Activated T-helper 2 cell treated with anti-CD3 and anti-CD28 coated beads, Interferon-gamma antibody, Interleukin-2, Interleukin-4, amounts not matched to agents 10 μg/mL and 5 μg/mL and 100 μg/mL, durations not matched to agents 14 hours and 24 hours and 36 hours (primary cell): ENCODE measurements at regions of chr15 and their contacts with region 1.

Region 1: DNA sequence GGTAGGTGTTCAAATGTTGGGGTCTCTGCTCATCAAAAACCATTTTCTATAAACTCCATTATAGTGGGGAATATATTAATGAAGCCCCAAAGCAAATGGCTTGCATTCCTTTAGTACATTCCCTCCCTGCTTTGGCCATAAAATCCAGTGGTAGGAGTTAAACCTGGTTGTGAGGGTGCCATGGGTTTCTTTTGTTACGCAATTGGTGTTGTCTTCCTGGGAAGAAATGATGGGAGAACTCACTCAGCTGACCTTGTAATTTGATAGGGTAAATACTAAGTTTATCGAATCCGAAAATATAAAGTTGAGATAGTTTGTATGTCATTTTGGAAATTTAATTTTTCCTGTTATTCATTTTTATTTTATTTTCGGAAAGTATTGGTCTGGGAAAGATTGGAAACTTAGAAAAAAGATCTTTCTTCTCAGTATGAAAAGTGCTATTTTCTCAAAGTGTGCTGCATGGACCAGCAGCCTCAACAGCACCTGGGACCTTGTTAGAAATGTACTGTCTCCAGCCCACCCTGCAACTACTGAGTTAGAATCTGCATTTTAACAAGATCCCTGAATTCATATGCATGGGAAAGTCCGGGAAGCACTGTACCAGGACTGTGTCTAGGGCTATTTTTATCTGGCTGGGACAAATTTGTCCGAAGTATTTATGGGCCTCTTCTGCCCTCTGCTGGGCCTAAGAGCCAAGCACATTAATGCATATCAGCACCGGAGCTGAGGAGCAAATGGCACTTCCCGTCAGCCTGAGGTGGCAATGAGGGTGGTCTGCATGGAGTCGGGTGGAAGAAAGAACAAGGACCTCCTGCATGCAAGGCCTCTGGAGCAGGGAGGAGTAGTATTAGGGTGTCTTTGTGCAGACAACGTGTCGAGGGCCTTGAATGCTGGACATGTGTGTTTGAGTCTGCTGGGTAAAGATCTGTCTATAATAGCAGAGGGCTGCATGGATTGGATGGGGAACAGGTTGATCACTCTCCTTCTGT is 54.7 kb downstream of the FAM81A start:
- DNase-seq: peak; percentile 38
- H3K4me3 Mint-ChIP-seq: no peak overlapping the region
- H3K27ac Mint-ChIP-seq: no peak overlapping the region
- H3K4me1 Mint-ChIP-seq: peaks cover 2% of the 10 kb centered on the region
- H3K27me3 Mint-ChIP-seq: peaks cover 26% of the 10 kb centered on the region

Region 2: GRCh38 chr15:58957101-58957973 is 535.3 kb before region 1 on chr15:
- intact Hi-C with region 1: loop called (anchors 5 kb)
- DNase-seq: peak; percentile 50
- H3K4me3 Mint-ChIP-seq: no peak overlapping the region
- H3K27ac Mint-ChIP-seq: no peak overlapping the region
- H3K4me1 Mint-ChIP-seq: peaks cover 12% of the 10 kb centered on the region
- H3K27me3 Mint-ChIP-seq: peaks cover 6% of the 10 kb centered on the region

Region 3: DNA sequence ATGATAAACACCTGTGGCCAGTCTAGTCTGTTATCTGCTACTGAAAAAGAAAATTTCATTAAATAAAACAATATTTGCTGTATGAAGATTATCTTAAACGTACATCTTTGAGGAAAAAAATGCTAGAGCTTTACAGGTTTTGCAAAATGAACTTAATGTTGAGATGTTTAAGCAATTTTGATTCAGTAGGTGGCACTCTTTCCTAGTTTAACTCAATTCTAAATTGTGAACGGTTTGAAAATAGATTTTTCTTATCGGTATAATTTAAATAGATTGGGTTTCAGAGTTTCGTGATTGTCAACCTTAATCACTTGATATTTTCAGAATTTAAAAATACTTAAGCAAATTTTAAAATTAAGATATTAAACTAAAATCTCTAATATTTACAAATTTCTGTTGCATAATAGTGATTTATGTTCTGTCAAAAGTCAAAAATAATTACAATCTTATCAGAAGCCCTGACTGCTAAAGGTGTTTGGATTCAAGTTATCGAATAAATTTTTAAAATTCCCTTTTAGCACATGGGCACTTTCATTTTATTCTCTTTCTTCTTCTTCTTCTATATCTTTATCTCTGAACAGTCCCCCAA is 512.2 kb before region 1 on chr15:
- intact Hi-C with region 1: loop called (anchors 1 kb)
- DNase-seq: no peak
- H3K4me3 Mint-ChIP-seq: no peak overlapping the region
- H3K27ac Mint-ChIP-seq: peak overlapping the region; percentile 46
- H3K4me1 Mint-ChIP-seq: peaks cover 34% of the 10 kb centered on the region
- H3K27me3 Mint-ChIP-seq: peaks cover 10% of the 10 kb centered on the region

Region 4: GRCh38 chr15:59174835-59175831 is 317.6 kb before region 1 on chr15:
- intact Hi-C with region 1: loop called (anchors 2 kb)
- DNase-seq: peak; percentile 22
- H3K4me3 Mint-ChIP-seq: no peak overlapping the region
- H3K27ac Mint-ChIP-seq: no peak overlapping the region
- H3K4me1 Mint-ChIP-seq: peaks cover 16% of the 10 kb centered on the region
- H3K27me3 Mint-ChIP-seq: peaks cover 6% of the 10 kb centered on the region

Region 5: GRCh38 chr15:59247364-59247763 is 245.3 kb before region 1 on chr15:
- intact Hi-C with region 1: loop called (anchors 2 kb)
- DNase-seq: peak; percentile 45
- H3K4me3 Mint-ChIP-seq: no peak overlapping the region
- H3K27ac Mint-ChIP-seq: no peak overlapping the region
- H3K4me1 Mint-ChIP-seq: peaks cover 39% of the 10 kb centered on the region
- H3K27me3 Mint-ChIP-seq: peaks cover 2% of the 10 kb centered on the region

Region 6: DNA sequence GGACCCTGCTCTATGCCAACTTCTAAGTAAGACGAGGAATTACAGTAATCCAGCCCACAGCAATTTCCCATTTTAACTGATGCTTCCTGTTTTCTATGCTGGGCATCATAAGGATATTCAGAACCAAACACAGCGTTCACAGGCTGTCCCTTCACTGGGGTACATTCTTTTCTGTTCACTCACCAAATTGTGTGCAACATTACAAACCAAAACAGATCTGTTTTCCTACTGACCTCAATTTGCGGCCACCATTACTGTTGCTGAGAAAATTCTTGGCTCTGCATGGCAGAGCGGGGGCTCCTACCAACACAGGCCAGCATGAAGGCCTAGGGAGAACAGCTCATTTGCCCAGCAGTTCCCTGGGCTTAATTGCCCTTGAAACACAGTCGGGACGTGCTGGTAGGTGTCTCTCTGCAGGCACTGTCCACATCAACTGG is 196.5 kb before region 1 on chr15:
- intact Hi-C with region 1: no loop called
- DNase-seq: no peak
- H3K4me3 Mint-ChIP-seq: no peak overlapping the region
- H3K27ac Mint-ChIP-seq: no peak overlapping the region
- H3K4me1 Mint-ChIP-seq: peaks cover 54% of the 10 kb centered on the region
- H3K27me3 Mint-ChIP-seq: peaks cover 12% of the 10 kb centered on the region

Region 7: DNA sequence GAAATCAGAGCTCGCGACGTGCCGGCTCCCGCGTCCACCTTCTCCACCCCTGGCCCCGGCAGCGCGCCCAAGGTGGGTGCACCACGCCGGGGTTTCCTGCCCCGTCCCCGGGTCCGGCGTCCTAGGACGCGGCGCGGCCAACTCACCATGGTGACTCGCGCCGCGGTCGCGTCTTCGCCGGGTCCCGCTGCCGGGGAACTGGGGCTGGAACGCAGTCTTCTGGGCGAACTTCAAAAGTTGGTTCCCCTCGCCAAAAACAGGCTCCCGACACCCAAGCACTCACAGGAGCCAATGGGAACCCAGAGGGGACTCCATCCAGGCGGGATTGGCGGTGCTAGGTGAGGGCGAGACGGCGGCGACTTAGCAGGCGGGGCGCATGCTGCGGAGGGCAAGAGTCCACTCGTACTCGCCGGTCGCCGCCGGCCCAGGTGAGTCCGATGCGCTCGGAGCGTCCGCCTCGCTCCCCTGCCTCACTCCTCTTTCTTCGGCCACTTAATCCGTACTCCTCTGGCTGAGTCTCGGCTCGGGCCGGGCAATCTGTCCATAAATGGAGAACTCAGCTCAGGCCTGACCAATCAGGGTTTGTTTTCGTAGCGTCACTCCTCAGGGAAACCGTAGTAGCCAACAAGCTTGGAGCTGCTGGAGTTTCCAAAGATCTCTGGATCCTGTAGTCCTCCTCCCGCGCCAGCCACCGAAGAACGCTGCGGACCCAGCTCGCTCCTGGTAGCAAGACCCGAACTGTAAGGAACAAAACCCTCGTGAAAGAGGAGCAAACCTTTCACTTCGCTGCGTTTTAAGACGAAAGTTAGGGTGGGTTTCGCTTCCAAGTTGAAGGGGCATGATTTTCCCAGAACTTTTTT is 120.1 kb before region 1 on chr15 and contains the start of gene MYO1E:
- intact Hi-C with region 1: loop called (anchors 10 kb)
- DNase-seq: peak; percentile 23
- H3K4me3 Mint-ChIP-seq: peak within 1 kb of the TSS; percentile 93
- H3K27ac Mint-ChIP-seq: peak within 1 kb of the TSS; percentile 62
- H3K4me1 Mint-ChIP-seq: peaks cover 31% of the 10 kb centered on the region
- H3K27me3 Mint-ChIP-seq: peaks cover 37% of the 10 kb centered on the region
- total RNA-seq, gene MYO1E: 71.3 and 72.7 TPM in 2 replicates

Region 8: DNA sequence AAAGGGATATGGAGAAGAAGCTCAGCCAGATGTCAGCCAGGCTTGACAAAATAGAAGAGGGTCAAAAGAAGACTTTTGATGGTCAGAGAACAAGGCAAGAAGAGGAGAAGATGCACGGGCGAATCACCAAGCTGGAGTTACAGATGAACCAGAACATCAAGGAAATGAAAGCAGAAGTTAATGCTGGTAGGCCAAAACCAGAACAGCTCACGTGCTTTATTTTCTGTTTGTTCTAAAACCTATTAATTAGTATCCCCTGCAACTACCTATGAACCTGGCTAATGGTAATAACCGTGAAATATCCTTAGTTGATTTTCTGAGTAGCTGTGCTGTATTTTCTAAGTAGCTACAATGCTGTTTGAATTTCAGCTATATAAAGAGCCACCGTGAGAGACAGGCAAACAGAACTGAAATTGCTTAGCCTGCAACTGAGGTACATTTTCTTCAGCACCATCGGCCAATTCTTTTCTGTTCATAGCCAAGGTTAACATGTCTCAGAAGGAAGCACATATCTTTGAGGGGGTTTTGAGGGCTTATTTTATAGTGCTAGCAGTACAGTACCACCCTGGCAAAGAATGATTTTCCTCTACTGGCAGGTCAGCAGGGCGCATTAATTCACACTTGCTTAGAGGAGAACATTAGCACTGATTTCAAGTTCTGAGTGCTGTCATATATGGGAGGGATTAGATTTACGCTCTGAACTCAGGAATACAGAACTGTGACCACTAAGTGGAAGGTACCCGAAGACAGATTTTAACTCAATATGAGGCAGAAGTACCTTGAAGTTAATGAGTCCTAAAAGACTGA is 24.2 kb after region 1 on chr15:
- intact Hi-C with region 1: no loop called
- DNase-seq: no peak
- H3K4me3 Mint-ChIP-seq: no peak overlapping the region
- H3K27ac Mint-ChIP-seq: no peak overlapping the region
- H3K4me1 Mint-ChIP-seq: no peaks in the 10 kb centered on the region
- H3K27me3 Mint-ChIP-seq: peaks cover 10% of the 10 kb centered on the region